ENCODE measurements at regions of chr22 and their contacts with region 1.

Region 1: DNA sequence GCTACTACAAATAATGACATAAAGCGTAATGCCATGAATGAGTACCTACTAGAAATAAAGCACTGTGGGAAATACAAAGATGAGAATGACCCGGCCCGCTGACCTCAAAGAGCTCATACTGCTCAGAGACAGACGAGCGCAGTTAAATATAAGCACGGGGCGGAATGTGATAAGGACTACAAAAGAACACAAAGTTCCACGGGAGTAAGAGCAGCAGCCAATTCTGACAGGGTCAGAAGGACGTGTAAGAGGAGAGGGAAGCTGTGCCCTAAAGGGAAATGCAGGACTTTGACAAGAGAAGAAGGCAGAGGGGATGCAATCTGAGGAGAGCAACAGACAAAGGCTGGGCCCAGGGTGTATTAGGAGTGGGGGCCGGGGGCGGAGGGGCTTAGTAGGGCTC is 314.6 kb downstream of the LARGE1 start:
- DNase-seq: no peak
- H3K4me3 ChIP-seq: no peak overlapping the region
- H3K27ac ChIP-seq: no peak overlapping the region
- H3K4me1 ChIP-seq: no peaks in the 10 kb centered on the region
- H3K27me3 ChIP-seq: no peaks in the 10 kb centered on the region
- CTCF ChIP-seq: no peak
- POLR2A ChIP-seq: no peak

Region 2: GRCh38 chr22:34210301-34210700 is 604.6 kb after region 1 on chr22:
- intact Hi-C with region 1: loop called (anchors 5 kb)
- DNase-seq: no peak
- H3K4me3 ChIP-seq: no peak overlapping the region
- H3K27ac ChIP-seq: no peak overlapping the region
- H3K4me1 ChIP-seq: no peaks in the 10 kb centered on the region
- H3K27me3 ChIP-seq: no peaks in the 10 kb centered on the region
- CTCF ChIP-seq: no peak
- POLR2A ChIP-seq: no peak

Region 3: DNA sequence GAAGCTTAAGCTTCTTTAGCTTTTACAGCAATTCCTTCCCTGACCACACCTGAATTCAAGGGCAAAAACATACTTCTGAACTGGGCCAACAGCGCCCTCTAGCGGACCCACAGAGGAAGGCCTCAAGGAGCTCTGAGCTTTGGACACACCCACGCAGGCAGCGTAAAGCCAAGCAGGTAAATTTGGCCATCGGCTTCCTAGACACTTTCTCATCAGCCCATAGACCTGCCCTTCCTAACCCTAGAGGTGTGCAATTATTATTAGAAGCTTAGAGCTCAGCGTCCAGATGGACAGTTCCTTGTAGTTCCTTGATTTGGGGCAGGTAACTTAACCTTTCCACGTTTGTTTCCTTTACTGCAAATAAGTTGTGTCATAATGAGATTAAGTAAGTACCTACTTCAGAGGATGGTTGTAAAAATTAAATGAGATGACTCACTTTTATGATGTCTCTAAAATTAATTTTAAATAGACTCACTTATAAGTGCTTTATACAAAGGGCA is 1626.0 kb after region 1 on chr22:
- intact Hi-C with region 1: no loop called
- DNase-seq: peak; percentile 20 to 81
- H3K4me3 ChIP-seq: no peak overlapping the region
- H3K27ac ChIP-seq: no peak overlapping the region
- H3K4me1 ChIP-seq: no peaks in the 10 kb centered on the region
- H3K27me3 ChIP-seq: peaks cover 0 to 18% of the 10 kb centered on the region in 2 donors
- CTCF ChIP-seq: peak; percentile 41 to 81 (median 70)
- POLR2A ChIP-seq: no peak